CD14-positive monocyte (primary cell): ENCODE measurements at regions of chr9 and their contacts with region 1.

Region 1: GRCh38 chr9:36074870-36075532 is 38.3 kb downstream of the RECK start:
- DNase-seq: no peak
- H3K4me3 ChIP-seq: no peak overlapping the region
- H3K4me3 Mint-ChIP-seq: no peak overlapping the region
- H3K27ac ChIP-seq: no peak overlapping the region
- H3K27ac Mint-ChIP-seq: peak overlapping the region in 1 of 7 donors; percentile 80
- H3K4me1 ChIP-seq: peaks cover 5 to 6% of the 10 kb centered on the region in 2 donors
- H3K4me1 Mint-ChIP-seq: peaks cover 11% of the 10 kb centered on the region
- H3K27me3 ChIP-seq: no peaks in the 10 kb centered on the region
- H3K27me3 Mint-ChIP-seq: no peaks in the 10 kb centered on the region
- CTCF ChIP-seq: no peak

Region 2: DNA sequence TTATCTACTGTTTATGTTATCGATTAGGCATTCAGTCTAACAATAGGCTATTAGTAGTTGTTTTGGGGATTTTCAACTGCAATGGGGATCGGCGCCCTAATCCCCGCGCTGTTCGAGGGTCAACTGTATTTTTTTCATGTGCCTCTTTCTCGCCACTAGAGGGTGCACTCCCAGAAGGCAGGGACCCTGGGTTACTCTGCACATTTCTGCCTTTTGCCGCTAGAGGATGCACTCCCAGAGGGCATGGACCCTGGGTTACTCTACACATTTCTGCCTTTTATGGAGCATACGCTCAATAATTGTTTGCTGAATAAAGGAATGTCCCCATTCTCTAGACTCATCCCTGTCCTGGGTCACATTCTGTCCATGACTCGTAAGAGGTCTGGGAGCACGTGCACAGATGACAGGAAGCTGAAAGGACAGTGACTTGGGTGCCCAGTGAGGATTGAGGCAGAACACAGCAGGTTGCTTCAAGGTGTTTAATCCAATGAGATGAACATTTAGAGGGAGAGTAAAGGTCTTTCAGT is 66.2 kb before region 1 on chr9:
- intact Hi-C with region 1: loop called in 1 of 2 experiments (anchors 2 kb)
- DNase-seq: peak; percentile 56 to 72 (median 58)
- H3K4me3 ChIP-seq: no peak overlapping the region
- H3K4me3 Mint-ChIP-seq: peak overlapping the region in 1 of 2 donors; percentile 47
- H3K27ac ChIP-seq: no peak overlapping the region
- H3K27ac Mint-ChIP-seq: no peak overlapping the region
- H3K4me1 ChIP-seq: no peaks in the 10 kb centered on the region
- H3K4me1 Mint-ChIP-seq: peaks cover 18% of the 10 kb centered on the region
- H3K27me3 ChIP-seq: peaks cover 0 to 4% of the 10 kb centered on the region in 2 donors
- H3K27me3 Mint-ChIP-seq: peaks cover 11 to 15% (median 12%) of the 10 kb centered on the region in 3 donors
- CTCF ChIP-seq: peak; percentile 99

Region 3: DNA sequence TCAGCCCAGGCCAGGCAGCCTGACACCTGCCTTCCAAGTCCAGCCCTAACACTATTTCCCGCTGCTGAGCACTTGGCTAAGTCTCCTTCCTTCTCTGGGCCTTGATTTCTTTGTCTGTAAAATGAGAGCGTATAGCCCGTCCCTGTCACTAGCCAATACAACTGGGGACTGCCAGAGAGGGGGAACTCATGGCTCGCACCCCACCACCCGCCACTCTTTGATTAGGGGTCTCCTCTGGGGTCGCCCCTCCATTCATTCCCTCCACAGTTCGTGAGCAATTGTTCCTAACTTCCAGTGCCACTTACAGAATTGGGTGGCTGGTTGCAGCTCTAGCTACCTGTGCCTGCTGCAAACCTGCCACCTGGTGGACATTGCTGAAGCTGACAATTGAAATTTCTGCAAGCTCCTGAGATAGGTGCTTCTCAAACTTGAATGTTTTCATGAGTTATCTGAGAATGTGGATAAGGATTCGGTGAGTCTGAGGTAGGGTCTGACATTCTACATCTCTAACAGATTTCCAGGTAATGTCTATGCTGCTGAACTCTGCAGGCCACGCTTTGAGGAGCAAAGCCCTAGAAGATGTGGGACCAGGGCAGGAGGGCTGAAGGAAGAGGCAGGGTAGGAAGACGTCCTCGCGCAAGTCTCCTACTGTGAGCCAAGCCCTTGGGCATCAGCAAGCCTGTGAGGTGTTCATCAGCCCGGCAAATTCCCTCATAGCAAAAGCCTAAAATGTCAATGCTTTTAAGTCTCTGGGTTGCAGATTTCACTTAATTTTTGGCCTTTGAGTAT is 51.5 kb before region 1 on chr9:
- intact Hi-C with region 1: no loop called
- DNase-seq: peak in 2 of 3 donors; percentile 44 to 46
- H3K4me3 ChIP-seq: no peak overlapping the region
- H3K4me3 Mint-ChIP-seq: no peak overlapping the region
- H3K27ac ChIP-seq: no peak overlapping the region
- H3K27ac Mint-ChIP-seq: no peak overlapping the region
- H3K4me1 ChIP-seq: no peaks in the 10 kb centered on the region
- H3K4me1 Mint-ChIP-seq: no peaks in the 10 kb centered on the region
- H3K27me3 ChIP-seq: no peaks in the 10 kb centered on the region
- H3K27me3 Mint-ChIP-seq: peaks cover 0 to 3% (median 2%) of the 10 kb centered on the region in 3 donors
- CTCF ChIP-seq: peak; percentile 82

Region 4: GRCh38 chr9:36148311-36149051 is 73.5 kb after region 1 on chr9:
- intact Hi-C with region 1: no loop called
- DNase-seq: peak; percentile 94 to 97 (median 96)
- H3K4me3 ChIP-seq: peak overlapping the region in 1 of 3 experiments; percentile 39
- H3K4me3 Mint-ChIP-seq: peak overlapping the region in 1 of 2 donors; percentile 15
- H3K27ac ChIP-seq: peak overlapping the region; percentile 97 to 99
- H3K27ac Mint-ChIP-seq: peak overlapping the region; percentile 89 to 100 (median 100)
- H3K4me1 ChIP-seq: peaks cover 100% of the 10 kb centered on the region in 2 donors
- H3K4me1 Mint-ChIP-seq: peaks cover 93% of the 10 kb centered on the region
- H3K27me3 ChIP-seq: no peaks in the 10 kb centered on the region
- H3K27me3 Mint-ChIP-seq: peaks cover 0 to 3% (median 0%) of the 10 kb centered on the region in 3 donors
- CTCF ChIP-seq: no peak